ENCODE measurements at regions of chr22 and their contacts with region 1.

Region 1: GRCh38 chr22:42621505-42622002 is 6.9 kb upstream of the POLDIP3 start:
- DNase-seq: peak; percentile 78
- ATAC-seq: peak; percentile 88
- H3K4me3 Mint-ChIP-seq: no peak overlapping the region
- H3K27ac Mint-ChIP-seq: no peak overlapping the region
- H3K4me1 Mint-ChIP-seq: peaks cover 4% of the 10 kb centered on the region
- H3K27me3 Mint-ChIP-seq: no peaks in the 10 kb centered on the region

Region 2: GRCh38 chr22:42229455-42230149 is 392.0 kb before region 1 on chr22:
- CTCF ChIA-PET with region 1: no interaction called
- POLR2A ChIA-PET with region 1: no interaction called
- intact Hi-C with region 1: no loop called
- DNase-seq: no peak
- ATAC-seq: no peak
- H3K4me3 Mint-ChIP-seq: no peak overlapping the region
- H3K27ac Mint-ChIP-seq: no peak overlapping the region
- H3K4me1 Mint-ChIP-seq: peaks cover 46% of the 10 kb centered on the region
- H3K27me3 Mint-ChIP-seq: no peaks in the 10 kb centered on the region

Region 3: DNA sequence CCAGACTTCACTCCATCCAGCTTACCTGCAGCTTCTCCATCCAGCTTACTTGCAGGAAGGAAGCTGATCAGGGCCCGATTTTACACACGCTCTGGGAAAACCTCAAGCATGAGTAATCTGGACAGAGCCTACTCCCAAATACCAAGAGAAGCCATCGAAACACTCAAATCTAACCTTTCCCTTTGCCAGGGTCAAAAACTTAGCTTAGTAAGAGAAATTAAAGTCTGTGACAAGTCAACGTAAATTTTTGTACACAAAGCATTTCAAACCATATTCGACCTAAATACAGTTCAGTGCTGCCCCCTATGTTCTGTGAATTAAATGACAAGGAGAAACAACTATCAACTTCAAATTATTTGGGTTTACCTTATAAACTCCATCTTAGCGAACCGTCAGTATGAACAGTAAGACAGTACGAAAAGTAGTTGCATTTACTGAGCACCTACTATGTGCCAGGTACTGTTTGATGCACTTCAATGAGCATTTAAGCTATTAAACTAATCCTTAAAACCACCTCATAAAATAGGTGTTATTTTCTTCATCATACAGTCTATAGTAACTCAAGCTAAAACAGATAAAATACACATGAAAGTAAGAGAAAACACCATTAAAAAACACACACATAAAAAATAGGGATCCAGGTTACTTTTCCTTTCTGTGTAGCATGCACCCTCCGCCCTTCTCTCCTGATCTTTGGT is 198.7 kb after region 1 on chr22:
- CTCF ChIA-PET with region 1: interaction called, 6 read pairs
- POLR2A ChIA-PET with region 1: no interaction called
- intact Hi-C with region 1: loop called in 1 of 2 experiments (anchors 1 kb)
- DNase-seq: no peak
- ATAC-seq: no peak
- H3K4me3 Mint-ChIP-seq: no peak overlapping the region
- H3K27ac Mint-ChIP-seq: no peak overlapping the region
- H3K4me1 Mint-ChIP-seq: peaks cover 5% of the 10 kb centered on the region
- H3K27me3 Mint-ChIP-seq: no peaks in the 10 kb centered on the region

Measured in activated CD4-positive, alpha-beta T cell treated with anti-CD3 and anti-CD28 coated beads for 36 hours (primary cell).